Breast epithelium (tissue), 4 donors: ENCODE measurements at regions of chr1 and their contacts with region 1.

Region 1: DNA sequence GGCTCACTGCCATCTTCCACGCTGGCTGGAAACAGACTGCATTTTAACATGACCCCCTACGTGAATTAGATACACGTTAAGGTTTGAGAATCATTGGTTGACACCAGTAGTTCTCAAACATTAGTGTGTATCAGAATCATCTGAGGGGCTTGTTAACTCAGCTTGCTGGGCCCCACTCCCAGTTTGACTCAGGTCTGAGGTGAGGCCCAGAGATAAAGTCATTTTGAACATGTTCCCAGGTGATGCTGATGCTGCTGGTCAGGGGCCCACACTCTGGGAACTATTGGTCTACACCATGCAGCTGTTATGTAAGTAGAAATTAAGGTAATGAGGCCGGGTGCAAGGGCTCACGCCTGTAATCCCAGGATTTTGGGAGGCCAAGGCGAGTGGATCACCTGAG is 1.3 kb downstream of the LSM10 start:
- DNase-seq: no peak
- H3K4me3 ChIP-seq: no peak overlapping the region
- H3K27ac ChIP-seq: no peak overlapping the region
- H3K4me1 ChIP-seq: no peaks in the 10 kb centered on the region
- H3K27me3 ChIP-seq: no peaks in the 10 kb centered on the region
- CTCF ChIP-seq: no peak
- POLR2A ChIP-seq: no peak

Region 2: GRCh38 chr1:36377791-36378492 is 18.4 kb before region 1 on chr1:
- intact Hi-C with region 1: loop called (anchors 1 kb)
- DNase-seq: no peak
- H3K4me3 ChIP-seq: no peak overlapping the region
- H3K27ac ChIP-seq: peak overlapping the region; percentile 35 to 41
- H3K4me1 ChIP-seq: peaks cover 14 to 26% of the 10 kb centered on the region in 2 donors
- H3K27me3 ChIP-seq: no peaks in the 10 kb centered on the region
- CTCF ChIP-seq: no peak
- POLR2A ChIP-seq: no peak